ENCODE measurements at regions of chr3 and their contacts with region 1.

Region 1: GRCh38 chr3:14921078-14921616 is 26.2 kb upstream of the NR2C2 start:
- DNase-seq: peak; percentile 80
- H3K4me3 ChIP-seq: no peak overlapping the region
- H3K27ac ChIP-seq: no peak overlapping the region
- H3K4me1 ChIP-seq: no peaks in the 10 kb centered on the region
- CTCF ChIP-seq: peak; percentile 93

Region 2: DNA sequence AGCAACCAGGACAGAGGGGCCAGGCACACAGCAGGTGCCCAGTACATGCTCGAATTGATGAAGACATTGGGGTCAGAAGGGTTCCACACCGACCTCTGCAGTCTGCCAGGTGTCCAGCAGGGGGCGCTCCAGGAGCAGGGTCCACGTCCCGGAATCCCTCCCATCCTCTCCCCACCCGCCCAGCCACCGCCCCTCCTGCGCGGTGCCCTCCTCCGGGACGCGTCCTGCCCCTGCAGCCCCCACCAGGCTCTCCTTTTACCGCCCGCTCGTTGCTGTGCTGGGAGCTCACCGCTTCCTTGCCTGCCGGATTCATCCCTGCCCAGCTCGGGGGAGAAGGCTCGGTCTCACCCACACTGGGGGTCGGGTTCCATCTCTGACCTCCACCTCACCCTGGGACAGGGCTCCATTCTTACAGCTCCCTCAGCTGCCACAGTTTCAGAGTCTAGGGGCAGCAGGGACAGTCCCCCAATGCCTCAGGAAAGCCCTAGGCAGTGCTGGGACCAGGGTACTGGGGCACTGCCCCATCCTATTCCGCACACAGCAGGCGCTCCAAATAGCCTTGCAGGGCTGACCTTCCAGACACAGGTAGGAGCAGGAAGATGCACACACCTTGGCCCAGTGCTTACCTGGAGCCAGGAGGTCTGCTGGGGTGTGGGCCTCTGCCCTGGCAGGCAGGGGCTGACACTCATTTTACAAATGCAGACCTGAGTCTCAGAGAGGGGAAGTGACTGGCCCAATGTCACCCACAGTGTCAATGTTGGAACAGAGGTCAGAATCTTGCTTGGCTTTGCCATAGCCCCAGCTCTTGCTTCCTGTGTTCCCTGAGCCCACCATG is 412.0 kb before region 1 on chr3:
- CTCF ChIA-PET with region 1: no interaction called
- POLR2A ChIA-PET with region 1: no interaction called
- intact Hi-C with region 1: loop called (anchors 1 kb)
- DNase-seq: peak; percentile 69
- H3K4me3 ChIP-seq: no peak overlapping the region
- H3K27ac ChIP-seq: no peak overlapping the region
- H3K4me1 ChIP-seq: no peaks in the 10 kb centered on the region
- CTCF ChIP-seq: peak; percentile 84

Region 3: DNA sequence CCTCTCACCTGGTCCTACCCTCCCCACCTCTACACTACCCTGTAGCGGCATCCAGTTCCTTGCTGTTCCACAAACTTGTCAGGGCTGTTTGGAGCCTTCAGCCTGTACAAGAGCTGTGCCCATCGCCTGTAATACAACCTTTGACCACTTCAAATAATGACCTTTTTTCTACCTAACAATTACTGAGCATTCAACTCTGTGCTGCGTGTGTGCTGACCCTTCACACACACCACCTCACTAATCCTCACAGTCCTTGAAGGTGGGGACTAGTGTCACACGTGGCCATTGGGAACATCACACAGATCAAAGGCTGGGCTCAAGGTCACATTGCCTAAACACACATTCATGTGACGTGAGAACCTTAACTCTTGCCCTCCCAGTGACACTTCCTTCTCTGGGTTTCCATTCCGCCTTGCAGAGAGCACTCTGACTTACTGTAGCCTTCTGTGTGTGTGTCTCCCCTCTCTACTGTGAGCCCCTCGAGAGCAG is 243.1 kb before region 1 on chr3:
- CTCF ChIA-PET with region 1: no interaction called
- POLR2A ChIA-PET with region 1: interaction called, 3 read pairs
- intact Hi-C with region 1: loop called (anchors 1 kb)
- DNase-seq: no peak
- H3K4me3 ChIP-seq: no peak overlapping the region
- H3K27ac ChIP-seq: no peak overlapping the region
- H3K4me1 ChIP-seq: peaks cover 9% of the 10 kb centered on the region
- CTCF ChIP-seq: no peak

Region 4: GRCh38 chr3:15007681-15008141 is 86.6 kb after region 1 on chr3:
- CTCF ChIA-PET with region 1: no interaction called
- POLR2A ChIA-PET with region 1: interaction called, 3 read pairs
- intact Hi-C with region 1: loop called (anchors 5 kb)
- DNase-seq: no peak
- H3K4me3 ChIP-seq: no peak overlapping the region
- H3K27ac ChIP-seq: no peak overlapping the region
- H3K4me1 ChIP-seq: no peaks in the 10 kb centered on the region
- CTCF ChIP-seq: no peak

Region 5: DNA sequence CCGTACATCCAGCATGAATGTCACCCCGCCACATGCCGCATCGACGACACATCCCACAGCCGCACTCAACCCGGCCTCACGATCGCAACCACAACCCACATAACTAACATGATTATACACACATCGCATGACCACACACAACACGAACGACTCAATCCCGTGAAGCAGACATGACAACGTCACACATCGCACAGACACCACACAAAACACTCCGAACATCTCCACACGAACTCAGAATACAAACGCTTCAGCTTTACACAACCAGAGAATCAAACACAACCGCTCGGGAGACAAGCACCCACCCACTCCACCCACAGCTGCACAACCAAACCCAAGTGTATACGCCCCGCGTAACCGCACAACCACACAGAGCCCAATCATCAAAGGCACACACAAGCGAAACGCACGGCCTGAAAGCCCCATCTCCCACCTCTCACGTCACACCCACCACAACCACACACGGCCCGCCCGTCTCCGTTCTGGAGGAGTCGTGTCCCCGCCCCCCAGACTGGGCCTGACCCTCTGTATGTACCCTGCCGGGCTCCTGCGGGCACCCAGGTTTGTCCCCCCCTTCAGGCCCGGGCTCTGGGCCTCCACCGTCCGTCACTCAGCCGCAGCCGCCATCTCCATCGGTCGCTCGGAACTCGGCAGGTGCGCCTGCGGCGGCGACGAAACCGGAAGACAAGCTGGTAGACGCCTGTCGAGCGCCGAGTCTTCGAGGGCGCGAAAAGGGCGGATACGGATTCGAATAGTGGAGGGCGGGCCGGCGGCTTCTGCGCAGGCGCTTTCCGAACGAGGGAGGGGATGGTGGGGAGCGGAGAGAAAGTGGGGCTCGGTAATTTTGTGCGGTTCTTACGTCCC is 177.6 kb after region 1 on chr3 and contains the start of gene RBSN:
- CTCF ChIA-PET with region 1: no interaction called
- POLR2A ChIA-PET with region 1: no interaction called
- intact Hi-C with region 1: loop called (anchors 5 kb)
- DNase-seq: peak; percentile 97
- H3K4me3 ChIP-seq: peak within 1 kb of the TSS; percentile 88
- H3K27ac ChIP-seq: peak within 1 kb of the TSS; percentile 39
- H3K4me1 ChIP-seq: peaks cover 16% of the 10 kb centered on the region
- CTCF ChIP-seq: no peak
- total RNA-seq, gene RBSN: 13.3 and 20.6 TPM in 2 replicates

Region 6: GRCh38 chr3:15610082-15610759 is 689.1 kb after region 1 on chr3:
- CTCF ChIA-PET with region 1: no interaction called
- POLR2A ChIA-PET with region 1: no interaction called
- intact Hi-C with region 1: no loop called
- DNase-seq: no peak
- H3K4me3 ChIP-seq: no peak overlapping the region
- H3K27ac ChIP-seq: no peak overlapping the region
- H3K4me1 ChIP-seq: no peaks in the 10 kb centered on the region
- CTCF ChIP-seq: no peak

Measured in OCI-LY7 (cell line).